Mammary epithelial cell (primary cell): ENCODE measurements at regions of chr14 and their contacts with region 1.

Region 1: GRCh38 chr14:49862089-49862673 is 9.6 kb upstream of the NEMF start:
- DNase-seq: peak; percentile 79
- H3K4me3 ChIP-seq: peak overlapping the region; percentile 72 to 87 (median 82)
- H3K27ac ChIP-seq: peak overlapping the region; percentile 94
- H3K4me1 ChIP-seq: peaks cover 13% of the 10 kb centered on the region
- H3K27me3 ChIP-seq: no peaks in the 10 kb centered on the region
- CTCF ChIP-seq: peak; percentile 100

Region 2: GRCh38 chr14:49920935-49921334 is 58.8 kb after region 1 on chr14:
- CTCF ChIA-PET with region 1: no interaction called
- dilution Hi-C with region 1: no loop called
- in situ Hi-C with region 1: no loop called
- intact Hi-C with region 1: no loop called
- DNase-seq: no peak
- H3K4me3 ChIP-seq: no peak overlapping the region
- H3K27ac ChIP-seq: no peak overlapping the region
- H3K4me1 ChIP-seq: no peaks in the 10 kb centered on the region
- H3K27me3 ChIP-seq: no peaks in the 10 kb centered on the region
- CTCF ChIP-seq: no peak

Region 3: GRCh38 chr14:50008562-50009350 is 146.6 kb after region 1 on chr14:
- CTCF ChIA-PET with region 1: interaction called, 8 read pairs
- dilution Hi-C with region 1: no loop called
- in situ Hi-C with region 1: loop called in 1 of 2 experiments (anchors 5 kb)
- intact Hi-C with region 1: loop called (anchors 1 kb)
- DNase-seq: peak; percentile 94
- H3K4me3 ChIP-seq: no peak overlapping the region
- H3K27ac ChIP-seq: peak overlapping the region; percentile 96
- H3K4me1 ChIP-seq: peaks cover 55% of the 10 kb centered on the region
- H3K27me3 ChIP-seq: no peaks in the 10 kb centered on the region
- CTCF ChIP-seq: no peak

Region 4: GRCh38 chr14:50060871-50061663 is 198.9 kb after region 1 on chr14:
- CTCF ChIA-PET with region 1: no interaction called
- dilution Hi-C with region 1: no loop called
- in situ Hi-C with region 1: no loop called
- intact Hi-C with region 1: loop called (anchors 2 kb)
- DNase-seq: peak; percentile 99
- H3K4me3 ChIP-seq: no peak overlapping the region
- H3K27ac ChIP-seq: peak overlapping the region; percentile 84
- H3K4me1 ChIP-seq: peaks cover 34% of the 10 kb centered on the region
- H3K27me3 ChIP-seq: no peaks in the 10 kb centered on the region
- CTCF ChIP-seq: peak in 1 of 2 donors; percentile 20

Region 5: DNA sequence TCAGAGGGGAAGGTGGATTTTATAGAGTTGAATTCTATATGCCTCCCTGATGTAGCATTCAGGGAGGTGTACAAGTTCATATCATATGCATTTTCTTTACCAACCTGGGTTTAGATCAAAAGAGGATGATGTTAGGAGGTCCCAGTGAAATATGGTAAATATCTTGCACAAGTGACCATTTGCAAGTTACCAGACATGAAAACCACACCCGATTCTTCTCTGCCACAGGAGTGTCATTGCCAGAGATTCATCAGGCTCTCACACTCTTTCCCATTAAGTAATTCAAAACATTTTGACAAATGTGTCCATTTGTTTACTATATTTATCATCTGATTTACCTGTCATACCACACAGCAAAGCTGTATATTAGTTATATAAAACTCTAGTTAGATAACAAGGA is 210.2 kb after region 1 on chr14:
- CTCF ChIA-PET with region 1: no interaction called
- dilution Hi-C with region 1: no loop called
- in situ Hi-C with region 1: no loop called
- intact Hi-C with region 1: no loop called
- DNase-seq: no peak
- H3K4me3 ChIP-seq: no peak overlapping the region
- H3K27ac ChIP-seq: no peak overlapping the region
- H3K4me1 ChIP-seq: peaks cover 9% of the 10 kb centered on the region
- H3K27me3 ChIP-seq: no peaks in the 10 kb centered on the region
- CTCF ChIP-seq: no peak

Region 6: GRCh38 chr14:50231475-50232275 is 369.5 kb after region 1 on chr14 and contains the start of gene SOS2:
- CTCF ChIA-PET with region 1: interaction called, 7 read pairs
- dilution Hi-C with region 1: no loop called
- in situ Hi-C with region 1: no loop called
- intact Hi-C with region 1: loop called (anchors 5 kb)
- DNase-seq: peak; percentile 86
- H3K4me3 ChIP-seq: peak within 1 kb of the TSS; percentile 86 to 93 (median 91)
- H3K27ac ChIP-seq: peak within 1 kb of the TSS; percentile 83
- H3K4me1 ChIP-seq: peaks cover 8% of the 10 kb centered on the region
- H3K27me3 ChIP-seq: no peaks in the 10 kb centered on the region
- CTCF ChIP-seq: peak in 1 of 2 donors; percentile 10
- total RNA-seq, gene SOS2: 19.6 to 35.2 TPM

Region 7: DNA sequence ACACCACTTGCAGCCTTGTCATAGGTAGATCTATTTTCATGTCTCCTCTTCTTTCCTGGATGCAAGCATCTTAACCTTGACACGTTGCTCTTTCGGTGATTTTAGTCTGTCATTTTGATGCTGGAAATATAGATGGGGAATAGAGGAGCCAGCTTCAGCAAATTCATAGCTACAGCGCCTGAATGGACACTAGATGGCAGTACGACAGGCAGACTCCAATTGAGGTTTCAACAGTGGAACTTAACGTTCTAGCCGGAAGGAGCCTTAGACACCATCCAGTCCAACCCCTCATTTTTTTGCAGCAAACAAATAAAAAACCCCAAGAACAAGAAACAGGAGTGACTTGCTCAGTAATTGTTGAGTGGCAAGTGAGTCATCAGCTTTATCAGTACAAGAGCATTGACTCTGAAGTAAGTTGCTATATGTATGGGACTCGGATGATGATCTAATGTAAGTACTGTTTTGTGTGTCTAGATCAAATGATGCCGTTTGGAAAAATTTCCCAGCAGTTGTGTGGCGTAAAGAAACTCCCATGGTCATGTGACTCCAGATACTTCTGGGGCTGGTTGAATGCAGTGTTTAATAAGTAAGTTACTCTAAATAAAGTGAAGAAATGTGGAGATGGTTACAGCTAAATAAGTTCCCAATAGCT is 459.0 kb after region 1 on chr14:
- CTCF ChIA-PET with region 1: interaction called, 12 read pairs
- dilution Hi-C with region 1: no loop called
- in situ Hi-C with region 1: no loop called
- intact Hi-C with region 1: no loop called
- DNase-seq: peak; percentile 99
- H3K4me3 ChIP-seq: no peak overlapping the region
- H3K27ac ChIP-seq: peak overlapping the region; percentile 95
- H3K4me1 ChIP-seq: peaks cover 26% of the 10 kb centered on the region
- H3K27me3 ChIP-seq: no peaks in the 10 kb centered on the region
- CTCF ChIP-seq: peak; percentile 87 to 91